ENCODE measurements at regions of chr3 and their contacts with region 1.

Region 1: GRCh38 chr3:188389711-188390342 is 235.9 kb downstream of the LPP start:
- DNase-seq: peak; percentile 73
- H3K4me3 ChIP-seq: no peak overlapping the region
- H3K27ac ChIP-seq: peak overlapping the region; percentile 47 to 73 (median 68)
- H3K4me1 ChIP-seq: peaks cover 0 to 93% (median 82%) of the 10 kb centered on the region in 4 donors
- H3K27me3 ChIP-seq: no peaks in the 10 kb centered on the region
- CTCF ChIP-seq: no peak
- EP300 ChIP-seq: peak in 1 of 4 donors; percentile 64
- POLR2A ChIP-seq: no peak

Region 2: DNA sequence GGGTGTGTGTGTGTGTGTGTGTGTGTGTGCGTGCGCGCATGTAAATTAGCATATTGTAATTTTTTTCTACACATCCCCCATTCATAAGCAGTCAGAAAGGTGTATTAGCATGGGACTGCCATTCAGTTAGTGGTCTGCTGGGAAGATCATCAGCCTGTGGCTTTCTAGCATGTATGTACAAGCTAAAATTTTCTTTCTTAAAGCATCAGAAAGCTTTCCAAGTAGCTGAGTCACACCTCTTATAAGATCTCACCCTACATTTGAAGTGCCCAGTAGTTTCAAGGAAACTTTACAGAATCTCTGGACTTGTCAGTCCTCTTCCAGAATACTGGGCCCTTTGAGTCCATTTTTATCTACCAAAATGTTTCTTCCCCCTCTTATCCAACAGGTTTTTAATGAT is 370.6 kb after region 1 on chr3:
- intact Hi-C with region 1: loop called (anchors 10 kb)
- DNase-seq: no peak
- H3K4me3 ChIP-seq: no peak overlapping the region
- H3K27ac ChIP-seq: peak overlapping the region in 3 of 4 donors; percentile 22 to 51 (median 32)
- H3K4me1 ChIP-seq: peaks cover 0 to 60% (median 39%) of the 10 kb centered on the region in 4 donors
- H3K27me3 ChIP-seq: no peaks in the 10 kb centered on the region
- CTCF ChIP-seq: no peak
- EP300 ChIP-seq: no peak
- POLR2A ChIP-seq: no peak

Measured in sigmoid colon (tissue), 7 donors.